Heart left ventricle (tissue), 16 donors: ENCODE measurements at regions of chr5 and their contacts with region 1.

Region 1: DNA sequence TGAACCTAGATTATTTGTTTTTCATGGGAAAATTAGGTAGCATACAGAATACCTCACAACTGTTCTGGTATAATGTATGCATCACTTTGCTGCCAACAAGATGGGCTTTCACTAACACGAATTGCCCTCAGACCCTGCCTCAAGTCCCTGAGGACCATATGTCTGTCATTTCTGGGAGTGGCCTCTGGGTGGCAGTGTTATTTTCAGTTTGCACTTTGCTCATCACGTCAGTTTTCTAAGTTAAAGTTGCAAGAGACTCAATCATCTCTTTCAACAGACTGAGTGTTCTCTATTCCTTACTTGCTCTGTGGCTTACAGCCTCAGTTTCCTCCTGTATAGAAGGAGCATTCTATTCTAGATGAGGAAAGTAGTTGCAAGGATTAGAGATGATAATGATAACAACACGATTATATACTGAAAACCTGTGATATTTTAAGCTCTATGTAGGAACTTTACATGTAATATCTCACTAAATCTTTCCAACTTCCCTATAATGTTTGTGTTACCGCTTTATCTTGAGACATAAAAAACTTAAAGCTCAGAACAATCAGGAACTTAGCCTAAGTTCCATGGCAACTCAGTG is 55.7 kb downstream of the TSSK1B start:
- DNase-seq: peak in 4 of 5 donors; percentile 35 to 50 (median 40)
- ATAC-seq: peak in 3 of 4 donors; percentile 41 to 72 (median 61)
- H3K4me3 ChIP-seq: no peak overlapping the region
- H3K27ac ChIP-seq: no peak overlapping the region
- H3K4me1 ChIP-seq: peaks cover 0 to 29% (median 7%) of the 10 kb centered on the region in 12 donors
- H3K27me3 ChIP-seq: no peaks in the 10 kb centered on the region
- CTCF ChIP-seq: peak; percentile 56 to 83 (median 74)
- POLR2A ChIP-seq: no peak

Region 2: DNA sequence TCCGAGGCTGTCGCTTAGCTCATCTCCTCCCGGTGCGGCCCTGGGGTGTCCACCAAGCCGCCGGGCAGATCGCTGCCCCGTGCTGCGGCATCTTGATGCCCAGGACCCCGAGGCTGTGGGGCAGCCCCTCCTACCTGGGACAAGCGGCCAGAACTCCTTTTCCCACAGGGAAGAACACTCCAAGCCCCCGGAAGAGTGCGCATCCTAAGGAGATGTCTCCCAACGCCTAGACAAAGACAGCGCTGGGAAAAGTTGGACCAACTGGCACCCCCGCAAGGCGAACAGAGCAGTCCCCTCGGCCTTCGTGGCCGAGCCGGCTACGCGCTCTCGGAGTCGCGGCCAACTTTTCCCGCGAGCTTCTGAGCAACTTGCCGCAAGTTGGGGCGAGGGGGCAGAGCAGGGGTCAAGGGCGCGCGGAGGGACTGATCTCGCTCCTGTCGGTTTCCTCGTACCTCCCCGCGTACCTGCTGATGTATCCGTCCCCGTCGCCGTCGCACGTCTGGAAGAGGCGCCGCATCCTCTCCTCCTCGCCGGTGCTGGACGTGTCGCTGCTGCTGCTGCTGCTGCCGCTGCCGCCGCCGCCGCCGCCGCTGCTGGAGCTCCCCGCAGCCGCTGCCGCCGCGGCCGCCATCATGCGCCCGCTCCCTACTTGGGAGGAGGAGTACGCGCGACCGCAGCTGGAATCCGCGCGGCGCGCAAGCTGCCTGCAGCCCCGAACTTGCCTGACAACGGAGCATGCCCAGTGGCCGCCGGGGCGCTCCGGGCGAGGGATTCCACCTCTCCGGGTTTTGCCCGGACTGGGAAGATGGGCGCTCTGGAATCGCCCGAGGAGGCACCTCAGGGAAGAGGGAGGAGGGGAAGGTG is 109.0 kb after region 1 on chr5 and contains the start of gene MCC:
- intact Hi-C with region 1: loop called in 4 of 10 experiments (anchors 5 to 10 kb)
- DNase-seq: peak; percentile 77 to 90 (median 85)
- ATAC-seq: peak; percentile 83 to 95 (median 94)
- H3K4me3 ChIP-seq: peak within 1 kb of the TSS; percentile 42 to 82 (median 64)
- H3K27ac ChIP-seq: peak within 1 kb of the TSS in 10 of 12 donors; percentile 4 to 66 (median 37)
- H3K4me1 ChIP-seq: peaks cover 0 to 27% (median 9%) of the 10 kb centered on the region in 12 donors
- H3K27me3 ChIP-seq: peaks cover 0 to 79% (median 0%) of the 10 kb centered on the region in 9 donors
- CTCF ChIP-seq: no peak
- POLR2A ChIP-seq: no peak
- total RNA-seq, gene MCC: 14.9 to 33.8 (median 27.7) TPM

Region 3: DNA sequence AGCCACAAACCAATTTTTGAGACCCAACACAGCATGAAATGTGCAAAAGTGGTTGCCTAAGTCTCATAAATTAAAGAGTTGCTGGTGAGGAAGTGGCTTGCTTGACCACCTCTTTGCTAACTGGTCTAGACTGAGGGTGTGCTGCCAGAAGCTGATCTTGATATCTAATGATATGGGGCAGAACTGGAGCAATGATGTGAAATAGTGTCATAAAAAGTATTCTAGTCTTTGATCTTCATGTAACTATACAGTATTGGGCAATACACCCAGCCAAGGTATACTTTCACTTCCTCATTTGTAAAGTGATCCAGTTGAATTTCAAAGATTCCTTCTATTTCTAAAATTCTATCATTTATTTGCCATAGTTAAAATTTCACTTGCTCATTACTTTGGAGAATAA is 128.6 kb after region 1 on chr5:
- intact Hi-C with region 1: loop called (anchors 2 to 5 kb)
- DNase-seq: no peak
- ATAC-seq: no peak
- H3K4me3 ChIP-seq: no peak overlapping the region
- H3K27ac ChIP-seq: no peak overlapping the region
- H3K4me1 ChIP-seq: peaks cover 0 to under 1% (median 0%) of the 10 kb centered on the region in 12 donors
- H3K27me3 ChIP-seq: peaks cover 0 to 23% (median 0%) of the 10 kb centered on the region in 9 donors
- CTCF ChIP-seq: no peak
- POLR2A ChIP-seq: no peak

Region 4: GRCh38 chr5:113513384-113514288 is 134.6 kb after region 1 on chr5 and contains the start of gene YTHDC2:
- intact Hi-C with region 1: loop called (anchors 2 to 5 kb)
- DNase-seq: peak; percentile 88 to 95 (median 91)
- ATAC-seq: peak; percentile 95 to 98 (median 98)
- H3K4me3 ChIP-seq: peak within 1 kb of the TSS; percentile 77 to 96 (median 82)
- H3K27ac ChIP-seq: peak within 1 kb of the TSS; percentile 70 to 97 (median 92)
- H3K4me1 ChIP-seq: peaks cover 0 to 37% (median 16%) of the 10 kb centered on the region in 12 donors
- H3K27me3 ChIP-seq: peaks cover 0 to 13% (median 0%) of the 10 kb centered on the region in 9 donors
- CTCF ChIP-seq: peak in 10 of 12 donors; percentile 8 to 58 (median 32)
- POLR2A ChIP-seq: peak in 1 of 2 donors; percentile 73
- total RNA-seq, gene YTHDC2: 9.4 to 19.8 (median 15.1) TPM

Region 5: GRCh38 chr5:113600255-113600905 is 221.3 kb after region 1 on chr5:
- intact Hi-C with region 1: loop called in 7 of 10 experiments (anchors 5 to 10 kb)
- DNase-seq: no peak
- ATAC-seq: no peak
- H3K4me3 ChIP-seq: no peak overlapping the region
- H3K27ac ChIP-seq: no peak overlapping the region
- H3K4me1 ChIP-seq: peaks cover 0 to 16% (median 0%) of the 10 kb centered on the region in 12 donors
- H3K27me3 ChIP-seq: no peaks in the 10 kb centered on the region
- CTCF ChIP-seq: no peak
- POLR2A ChIP-seq: no peak

Region 6: GRCh38 chr5:113606298-113607134 is 227.5 kb after region 1 on chr5:
- intact Hi-C with region 1: loop called in 7 of 10 experiments (anchors 5 to 10 kb)
- DNase-seq: peak in 4 of 5 donors; percentile 30 to 63 (median 46)
- ATAC-seq: peak; percentile 83 to 93 (median 90)
- H3K4me3 ChIP-seq: peak overlapping the region in 6 of 12 donors; percentile 7 to 35 (median 23)
- H3K27ac ChIP-seq: no peak overlapping the region
- H3K4me1 ChIP-seq: peaks cover 0 to 11% (median 2%) of the 10 kb centered on the region in 12 donors
- H3K27me3 ChIP-seq: peaks cover 0 to 3% (median 0%) of the 10 kb centered on the region in 9 donors
- CTCF ChIP-seq: peak; percentile 63 to 84 (median 75)
- POLR2A ChIP-seq: no peak